H1 (cell line): ENCODE measurements at regions of chr1 and their contacts with region 1.

Region 1: DNA sequence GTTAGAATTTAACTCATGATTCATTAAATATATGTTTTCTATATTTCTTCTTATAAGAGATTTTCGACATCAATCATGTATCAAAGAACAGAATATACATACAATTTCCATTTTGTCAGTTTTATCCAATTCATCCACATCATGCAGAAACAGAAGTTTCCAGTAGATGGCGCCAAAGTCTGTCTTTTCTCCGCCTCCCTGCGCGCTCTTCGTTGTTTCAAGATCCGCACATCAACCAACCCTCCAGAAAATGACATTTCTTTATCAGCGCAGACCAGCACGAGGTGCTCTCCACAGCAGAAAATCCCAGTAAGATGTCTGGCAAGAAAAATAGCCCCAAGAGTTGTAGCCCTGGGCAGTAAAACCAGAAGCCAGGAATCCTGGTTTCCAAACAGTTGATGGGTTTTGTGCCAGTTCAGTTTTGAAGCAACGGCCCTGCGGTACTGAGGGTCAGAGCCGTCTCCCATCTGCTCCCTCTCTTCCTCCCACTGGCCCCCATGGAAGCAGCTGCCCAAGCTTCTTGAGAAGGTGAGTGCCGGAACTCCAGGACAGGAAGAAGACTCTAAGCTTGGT is 38.6 kb upstream of the GPR137B start:
- DNase-seq: peak in 1 of 2 experiments; percentile 68
- H3K4me3 ChIP-seq: peak overlapping the region in 1 of 4 experiments; percentile 41; a peak in 1 of 8 replicates
- H3K27ac ChIP-seq: no peak overlapping the region
- H3K4me1 ChIP-seq: peaks cover 2 to 9% (median 3%) of the 10 kb centered on the region in 4 experiments; a peak in 6 of 7 replicates
- H3K27me3 ChIP-seq: no peaks in the 10 kb centered on the region
- CTCF ChIP-seq: peak; percentile 37 to 76 (median 76)
- EP300 ChIP-seq: no peak
- POLR2A ChIP-seq: no peak
- RAD21 ChIP-seq: peak; percentile 94 to 95

Region 2: GRCh38 chr1:236120721-236121153 is 17.0 kb after region 1 on chr1:
- CTCF ChIA-PET with region 1: interaction called, 61 read pairs
- POLR2A ChIA-PET with region 1: no interaction called
- DNase-seq: no peak
- H3K4me3 ChIP-seq: no peak overlapping the region
- H3K27ac ChIP-seq: no peak overlapping the region
- H3K4me1 ChIP-seq: no peaks in the 10 kb centered on the region
- H3K27me3 ChIP-seq: no peaks in the 10 kb centered on the region
- CTCF ChIP-seq: no peak
- EP300 ChIP-seq: no peak
- POLR2A ChIP-seq: no peak
- RAD21 ChIP-seq: no peak

Region 3: GRCh38 chr1:236168716-236169429 is 65.1 kb after region 1 on chr1:
- CTCF ChIA-PET with region 1: interaction called, 12 read pairs
- POLR2A ChIA-PET with region 1: no interaction called
- DNase-seq: peak; percentile 21 to 66
- H3K4me3 ChIP-seq: no peak overlapping the region
- H3K27ac ChIP-seq: no peak overlapping the region
- H3K4me1 ChIP-seq: peaks cover 0 to 4% (median under 1%) of the 10 kb centered on the region in 4 experiments; a peak in 1 of 7 replicates
- H3K27me3 ChIP-seq: no peaks in the 10 kb centered on the region
- CTCF ChIP-seq: peak; percentile 60 to 78 (median 68)
- EP300 ChIP-seq: no peak
- POLR2A ChIP-seq: no peak
- RAD21 ChIP-seq: peak; percentile 49 to 54

Region 4: GRCh38 chr1:236489710-236490377 is 386.1 kb after region 1 on chr1:
- CTCF ChIA-PET with region 1: interaction called, 15 read pairs
- POLR2A ChIA-PET with region 1: no interaction called
- DNase-seq: no peak
- H3K4me3 ChIP-seq: no peak overlapping the region
- H3K27ac ChIP-seq: no peak overlapping the region
- H3K4me1 ChIP-seq: peaks cover 2 to 8% (median 6%) of the 10 kb centered on the region in 4 experiments; a peak in 5 of 7 replicates
- H3K27me3 ChIP-seq: no peaks in the 10 kb centered on the region
- CTCF ChIP-seq: peak in 2 of 3 experiments; percentile 34 to 47; a peak in 2 of 4 replicates
- EP300 ChIP-seq: no peak
- POLR2A ChIP-seq: no peak
- RAD21 ChIP-seq: peak; percentile 57 to 67

Region 5: GRCh38 chr1:236543065-236543669 is 439.4 kb after region 1 on chr1:
- CTCF ChIA-PET with region 1: interaction called, 16 read pairs
- POLR2A ChIA-PET with region 1: interaction called, 4 read pairs
- DNase-seq: peak in 1 of 2 experiments; percentile 52
- H3K4me3 ChIP-seq: no peak overlapping the region
- H3K27ac ChIP-seq: 0 out of 2 replicates have a peak overlapping the region, but pooled peaks have one; percentile 29
- H3K4me1 ChIP-seq: no peaks in the 10 kb centered on the region
- H3K27me3 ChIP-seq: no peaks in the 10 kb centered on the region
- CTCF ChIP-seq: peak; percentile 42 to 65 (median 63)
- EP300 ChIP-seq: no peak
- POLR2A ChIP-seq: no peak
- RAD21 ChIP-seq: peak; percentile 30 to 46; a peak in 3 of 4 replicates